Left colon (tissue), 2 donors: ENCODE measurements at regions of chr13 and their contacts with region 1.

Region 1: GRCh38 chr13:95627590-95627989 is 16.9 kb downstream of the DZIP1 start:
- DNase-seq: no peak
- ATAC-seq: no peak

Region 2: GRCh38 chr13:95834134-95834765 is 206.7 kb after region 1 on chr13:
- intact Hi-C with region 1: loop called in 1 of 2 experiments (anchors 5 kb)
- DNase-seq: peak; percentile 32 to 41
- ATAC-seq: peak; percentile 82